ENCODE measurements at regions of chr1 and their contacts with region 1.

Region 1: DNA sequence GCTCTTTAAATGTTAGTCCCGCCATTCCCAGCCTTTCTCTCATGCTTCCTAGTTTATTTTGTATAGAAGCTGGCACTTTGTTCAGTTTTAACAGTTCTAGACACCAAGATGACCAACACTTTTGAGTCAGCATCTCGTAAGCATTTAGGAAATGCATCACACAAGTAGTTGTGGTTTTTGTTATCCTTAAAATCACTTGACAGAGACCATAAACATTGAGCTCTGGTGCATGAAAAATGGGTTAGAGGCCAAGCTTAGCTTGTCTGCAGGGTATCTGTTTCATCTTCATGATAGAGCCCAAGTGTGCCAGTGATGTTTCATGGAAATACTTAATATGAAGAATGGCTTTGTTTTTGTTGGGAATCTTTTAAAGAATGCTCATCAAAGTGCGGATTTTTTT is 159.7 kb downstream of the DISP1 start:
- DNase-seq: peak; percentile 28
- H3K4me3 ChIP-seq: no peak overlapping the region
- H3K27ac ChIP-seq: no peak overlapping the region
- H3K4me1 ChIP-seq: no peaks in the 10 kb centered on the region
- H3K27me3 ChIP-seq: no peaks in the 10 kb centered on the region
- CTCF ChIP-seq: no peak
- POLR2A ChIP-seq: no peak

Region 2: DNA sequence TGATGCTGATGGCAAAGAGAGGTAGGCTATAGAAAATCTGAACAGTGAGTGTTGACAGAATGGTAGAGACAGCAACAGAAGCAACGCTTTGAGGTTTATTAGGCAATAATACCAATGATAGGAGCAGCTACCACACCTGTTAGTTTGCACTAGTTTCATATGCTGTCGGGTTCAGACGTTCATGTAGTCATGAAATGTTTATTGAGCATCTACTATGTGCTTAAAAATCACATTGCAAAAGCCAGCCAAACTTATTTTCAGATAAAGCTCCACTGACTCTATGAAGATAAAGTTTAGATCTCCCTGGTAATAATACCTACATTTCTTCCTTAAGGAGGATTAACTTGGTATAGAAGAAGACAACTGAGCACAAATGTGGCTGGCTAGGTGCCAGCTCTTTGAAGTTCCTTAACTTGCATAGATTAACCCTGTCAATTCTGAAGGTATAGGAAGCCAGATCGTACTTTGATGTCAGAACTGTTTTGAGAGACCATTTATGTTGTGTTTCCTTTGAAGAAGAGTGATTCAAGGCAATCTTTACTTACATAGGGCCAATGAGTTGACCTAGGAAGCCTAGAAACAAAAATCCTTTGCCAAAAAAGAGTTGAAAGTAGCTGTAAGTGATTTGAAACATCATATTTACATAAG is 88.2 kb before region 1 on chr1:
- CTCF ChIA-PET with region 1: no interaction called
- POLR2A ChIA-PET with region 1: no interaction called
- dilution Hi-C with region 1: no loop called
- intact Hi-C with region 1: loop called (anchors 5 kb)
- DNase-seq: no peak
- H3K4me3 ChIP-seq: no peak overlapping the region
- H3K27ac ChIP-seq: no peak overlapping the region
- H3K4me1 ChIP-seq: peaks cover 14% of the 10 kb centered on the region
- H3K27me3 ChIP-seq: no peaks in the 10 kb centered on the region
- CTCF ChIP-seq: no peak
- POLR2A ChIP-seq: no peak

Region 3: DNA sequence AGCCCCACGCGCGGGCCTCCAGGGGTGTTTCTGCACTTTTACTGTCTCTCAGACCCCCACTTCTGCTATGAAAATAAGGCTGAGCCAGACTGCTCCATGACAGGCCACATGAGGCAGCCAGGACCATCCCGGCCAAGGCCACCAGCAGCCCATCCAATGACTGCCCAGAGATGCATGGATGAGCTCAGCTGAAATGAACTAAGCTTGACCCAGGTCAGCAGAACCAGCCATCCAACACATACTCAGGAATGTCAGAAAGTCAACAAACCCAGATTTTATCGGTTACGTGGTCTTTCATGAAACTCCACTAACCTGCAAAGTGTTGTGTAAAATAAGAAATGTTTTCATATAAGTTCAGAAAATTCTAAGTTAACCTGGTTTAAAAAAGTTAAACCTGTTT is 469.9 kb after region 1 on chr1:
- CTCF ChIA-PET with region 1: no interaction called
- POLR2A ChIA-PET with region 1: no interaction called
- dilution Hi-C with region 1: no loop called
- intact Hi-C with region 1: no loop called
- DNase-seq: no peak
- H3K4me3 ChIP-seq: no peak overlapping the region
- H3K27ac ChIP-seq: no peak overlapping the region
- H3K4me1 ChIP-seq: no peaks in the 10 kb centered on the region
- H3K27me3 ChIP-seq: no peaks in the 10 kb centered on the region
- CTCF ChIP-seq: no peak
- POLR2A ChIP-seq: no peak